Calu3 (cell line): ENCODE measurements at regions of chr4 and their contacts with region 1.

Region 1: DNA sequence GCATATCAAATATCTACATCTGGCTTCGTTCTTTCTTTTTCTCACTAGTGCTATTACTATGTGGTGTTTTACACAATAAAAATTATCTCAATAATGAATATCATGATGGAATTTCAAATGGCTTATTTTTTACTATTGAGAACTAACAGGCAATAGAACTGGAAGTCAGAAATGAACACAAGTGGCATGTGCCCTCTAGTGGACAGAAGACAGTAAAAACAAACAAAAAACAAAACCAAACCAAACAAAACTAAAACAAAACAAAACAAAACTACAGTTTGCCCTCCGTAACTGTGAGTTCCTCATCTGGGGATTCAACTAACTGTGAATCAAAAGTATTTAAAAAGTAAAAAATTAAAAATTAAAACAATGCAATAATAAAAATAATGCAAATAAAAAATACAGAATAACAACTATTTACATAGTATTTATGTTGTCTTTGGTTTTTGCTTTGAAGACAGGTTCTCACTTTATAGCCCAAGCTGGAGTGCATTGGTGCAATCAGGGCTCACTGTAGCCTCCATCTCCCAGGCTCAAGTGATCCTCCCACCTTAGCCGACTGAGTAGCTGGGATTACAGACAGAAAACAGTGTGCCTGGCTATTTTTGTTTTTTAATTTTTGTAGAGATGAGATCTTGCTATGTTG is 195.6 kb upstream of the TACR3 start:
- DNase-seq: no peak
- H3K4me3 Mint-ChIP-seq: no peak overlapping the region
- H3K27ac Mint-ChIP-seq: no peak overlapping the region
- H3K4me1 Mint-ChIP-seq: no peaks in the 10 kb centered on the region
- H3K27me3 Mint-ChIP-seq: no peaks in the 10 kb centered on the region
- CTCF ChIP-seq: no peak

Region 2: GRCh38 chr4:103478729-103479128 is 436.6 kb before region 1 on chr4:
- CTCF ChIA-PET with region 1: no interaction called
- intact Hi-C with region 1: loop called (anchors 5 kb)
- DNase-seq: no peak
- H3K4me3 Mint-ChIP-seq: no peak overlapping the region
- H3K27ac Mint-ChIP-seq: no peak overlapping the region
- H3K4me1 Mint-ChIP-seq: no peaks in the 10 kb centered on the region
- H3K27me3 Mint-ChIP-seq: no peaks in the 10 kb centered on the region
- CTCF ChIP-seq: no peak

Region 3: GRCh38 chr4:103634236-103634635 is 281.1 kb before region 1 on chr4:
- CTCF ChIA-PET with region 1: no interaction called
- intact Hi-C with region 1: loop called (anchors 10 kb)
- DNase-seq: no peak
- H3K4me3 Mint-ChIP-seq: no peak overlapping the region
- H3K27ac Mint-ChIP-seq: no peak overlapping the region
- H3K4me1 Mint-ChIP-seq: no peaks in the 10 kb centered on the region
- H3K27me3 Mint-ChIP-seq: no peaks in the 10 kb centered on the region
- CTCF ChIP-seq: no peak

Region 4: GRCh38 chr4:103778642-103779041 is 136.7 kb before region 1 on chr4:
- CTCF ChIA-PET with region 1: no interaction called
- intact Hi-C with region 1: no loop called
- DNase-seq: no peak
- H3K4me3 Mint-ChIP-seq: no peak overlapping the region
- H3K27ac Mint-ChIP-seq: no peak overlapping the region
- H3K4me1 Mint-ChIP-seq: no peaks in the 10 kb centered on the region
- H3K27me3 Mint-ChIP-seq: no peaks in the 10 kb centered on the region
- CTCF ChIP-seq: no peak

Region 5: GRCh38 chr4:104344342-104344980 is 429.1 kb after region 1 on chr4:
- CTCF ChIA-PET with region 1: no interaction called
- intact Hi-C with region 1: no loop called
- DNase-seq: no peak
- H3K4me3 Mint-ChIP-seq: no peak overlapping the region
- H3K27ac Mint-ChIP-seq: no peak overlapping the region
- H3K4me1 Mint-ChIP-seq: no peaks in the 10 kb centered on the region
- H3K27me3 Mint-ChIP-seq: no peaks in the 10 kb centered on the region
- CTCF ChIP-seq: no peak